Aorta (tissue), 5 donors: ENCODE measurements at regions of chr20 and their contacts with region 1.

Region 1: DNA sequence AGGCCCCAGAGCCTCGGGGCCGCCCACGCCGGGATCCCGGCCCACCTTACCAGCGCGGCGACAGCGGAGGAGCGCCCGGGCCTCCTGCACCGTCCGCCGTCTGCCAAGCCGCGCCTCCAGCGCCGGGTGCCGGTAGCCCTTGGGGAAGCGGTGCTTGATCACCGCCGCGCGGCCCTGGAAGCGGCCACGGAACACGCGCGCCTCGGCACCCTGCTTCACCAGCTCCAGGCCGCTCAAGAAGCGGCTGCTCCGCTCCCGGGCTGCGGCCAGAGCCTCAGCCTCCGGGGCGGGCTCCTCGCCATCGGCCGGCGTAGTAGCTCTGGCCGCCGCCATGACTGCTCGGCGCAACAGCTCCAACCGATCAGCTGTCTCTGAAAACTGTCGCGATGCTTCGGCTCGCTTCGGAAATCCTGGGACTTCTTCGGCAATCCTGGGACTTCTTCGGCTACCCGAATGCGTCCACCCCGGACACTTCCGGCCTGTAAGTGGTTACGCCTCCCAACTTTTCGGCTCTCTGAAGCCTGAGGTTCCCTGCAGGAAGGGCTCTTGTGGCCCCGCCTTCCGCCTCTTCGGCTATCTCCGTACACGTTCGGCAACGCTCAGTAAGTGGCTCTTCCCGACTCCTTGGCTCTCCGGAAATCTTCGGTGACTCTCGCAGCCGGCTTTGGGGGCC is at the start of gene TP53RK:
- DNase-seq: peak; percentile 99 to 100
- ATAC-seq: peak; percentile 99
- H3K4me3 ChIP-seq: peak within 1 kb of the TSS; percentile 65 to 94
- H3K27ac ChIP-seq: peak within 1 kb of the TSS; percentile 80 to 87
- H3K4me1 ChIP-seq: peaks cover 3 to 4% of the 10 kb centered on the region in 2 donors
- H3K27me3 ChIP-seq: no peaks in the 10 kb centered on the region
- total RNA-seq, gene TP53RK: 9.4 to 10.4 TPM

Region 2: DNA sequence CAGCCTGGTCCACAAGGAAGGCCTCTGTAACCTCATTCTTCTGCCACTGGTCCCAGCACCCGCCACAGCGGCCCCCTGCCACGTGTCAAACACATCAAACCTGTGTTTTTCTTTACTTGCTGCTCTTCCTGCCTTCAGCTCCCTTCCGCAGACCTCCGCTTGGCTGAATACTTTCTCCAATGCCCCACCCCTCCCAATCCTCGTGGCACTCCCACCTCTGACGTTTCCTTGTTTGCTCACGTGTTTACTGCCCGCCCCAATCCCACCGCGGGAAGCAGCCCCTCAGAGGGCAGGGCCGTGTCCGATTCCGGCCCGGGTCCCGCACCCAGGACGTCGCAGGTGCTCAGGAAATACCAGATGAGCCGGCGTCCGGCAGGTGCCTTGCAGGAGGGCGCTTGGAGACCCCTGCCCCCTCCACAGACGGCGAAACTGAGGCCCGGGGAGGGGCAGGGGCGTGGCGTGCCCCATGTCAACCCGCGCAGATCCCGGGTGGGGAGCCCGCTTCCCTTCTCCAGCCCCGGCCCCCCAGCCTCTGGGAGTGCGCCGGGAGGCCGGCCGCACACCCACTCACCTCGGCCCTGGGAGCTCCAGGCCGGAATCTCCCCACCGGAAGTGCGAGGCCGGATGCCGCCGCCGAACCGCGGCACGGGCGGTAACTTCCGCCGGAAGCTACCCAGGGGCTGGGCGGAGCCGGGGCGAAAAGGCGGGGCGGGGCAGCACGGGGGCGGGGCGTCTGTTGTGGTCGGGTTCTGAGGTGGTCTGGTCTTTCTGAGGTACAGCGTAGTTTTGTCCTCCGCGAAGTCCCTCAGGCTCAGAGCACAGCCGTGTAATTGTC is 325.2 kb before region 1 on chr20:
- intact Hi-C with region 1: loop called in 1 of 2 experiments (anchors 10 kb)
- DNase-seq: peak; percentile 93 to 97
- ATAC-seq: peak; percentile 97
- H3K4me3 ChIP-seq: peak overlapping the region; percentile 66 to 83
- H3K27ac ChIP-seq: peak overlapping the region; percentile 73 to 93
- H3K4me1 ChIP-seq: peaks cover 0 to 3% of the 10 kb centered on the region in 2 donors
- H3K27me3 ChIP-seq: no peaks in the 10 kb centered on the region

Region 3: DNA sequence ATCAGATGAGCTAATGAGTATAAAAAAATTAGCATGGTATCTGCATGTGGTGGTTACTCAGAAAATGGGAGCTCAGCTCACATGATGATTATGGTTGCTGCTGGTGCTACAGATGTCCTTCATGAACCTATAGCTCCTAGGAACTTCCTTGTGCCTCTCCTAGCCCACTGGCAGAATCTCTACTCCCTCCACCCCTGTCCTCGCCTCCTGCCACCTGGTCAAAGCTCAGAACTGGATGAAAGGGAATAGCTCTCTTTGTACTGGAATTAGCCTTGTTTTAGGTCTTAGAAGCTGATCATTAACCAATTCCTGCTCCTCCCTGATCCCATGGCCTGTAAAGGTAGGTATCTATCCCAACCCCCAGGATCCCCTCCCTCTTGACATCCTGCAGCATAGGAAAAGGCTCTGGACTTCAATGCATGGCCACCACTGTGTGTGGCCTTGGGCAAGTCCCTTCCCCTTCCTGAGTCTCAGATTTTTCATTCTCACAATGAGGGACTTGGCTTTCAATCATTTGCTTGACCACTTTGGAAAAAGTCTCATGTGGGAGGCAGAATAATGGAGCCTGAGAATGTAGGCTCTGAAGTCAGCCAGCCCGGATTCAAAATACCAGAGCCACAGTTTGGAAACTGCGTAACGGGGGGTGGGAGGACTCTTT is 81.9 kb before region 1 on chr20:
- intact Hi-C with region 1: no loop called
- DNase-seq: no peak
- ATAC-seq: no peak
- H3K4me3 ChIP-seq: no peak overlapping the region
- H3K27ac ChIP-seq: no peak overlapping the region
- H3K4me1 ChIP-seq: no peaks in the 10 kb centered on the region
- H3K27me3 ChIP-seq: no peaks in the 10 kb centered on the region

Region 4: DNA sequence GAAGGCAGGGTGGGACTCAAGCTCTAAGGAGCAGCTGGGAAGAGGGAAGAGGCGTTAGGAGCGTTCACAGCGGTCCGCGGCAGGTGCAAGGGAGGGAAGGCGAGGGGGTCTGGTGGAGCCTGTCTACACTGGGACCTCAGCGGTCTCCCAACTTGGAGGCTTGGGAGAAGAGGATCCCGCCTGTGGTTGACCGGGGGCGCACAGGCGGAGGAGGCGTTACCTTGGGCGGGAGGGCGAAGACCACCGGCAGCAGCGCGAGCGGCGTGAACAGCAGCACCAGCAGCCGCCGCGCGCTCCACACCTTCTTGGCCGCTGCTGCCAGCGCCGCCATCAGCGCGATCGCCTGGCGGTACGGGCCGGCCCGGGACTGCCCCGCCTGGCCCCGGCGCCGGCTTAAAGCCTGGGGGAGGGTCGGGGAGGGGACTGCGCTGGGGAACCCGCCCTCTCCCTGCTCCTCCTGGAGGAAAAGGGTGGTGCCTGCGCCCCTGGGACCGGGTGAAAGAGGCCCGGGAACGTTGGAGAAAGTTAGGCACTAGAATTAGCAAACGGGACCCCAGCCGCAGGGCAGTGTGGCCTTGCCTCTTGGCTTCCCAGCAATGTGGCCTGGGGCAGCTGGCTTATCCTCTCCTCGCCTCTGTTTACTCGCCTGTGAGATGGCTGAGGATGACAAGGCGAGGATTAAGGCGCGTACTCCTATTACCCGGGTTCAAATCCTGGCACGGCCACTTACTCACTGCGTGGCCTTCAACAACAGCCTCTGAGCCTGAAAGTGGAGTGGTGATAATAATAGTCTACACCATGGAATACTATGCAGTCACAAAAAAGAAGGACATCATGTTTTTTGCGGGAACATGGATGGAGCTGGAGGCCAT is 37.9 kb before region 1 on chr20 and contains the start of gene SLC13A3:
- intact Hi-C with region 1: no loop called
- DNase-seq: no peak
- ATAC-seq: no peak
- H3K4me3 ChIP-seq: no peak within 1 kb of the TSS
- H3K27ac ChIP-seq: no peak within 1 kb of the TSS
- H3K4me1 ChIP-seq: no peaks in the 10 kb centered on the region
- H3K27me3 ChIP-seq: no peaks in the 10 kb centered on the region
- total RNA-seq, gene SLC13A3: 3.7 to 5.1 TPM